ENCODE measurements at regions of chr14 and their contacts with region 1.

Region 1: GRCh38 chr14:76784266-76785264 is 23.3 kb downstream of the VASH1 start:
- DNase-seq: peak; percentile 90
- H3K4me3 ChIP-seq: no peak overlapping the region
- H3K27ac ChIP-seq: no peak overlapping the region
- H3K4me1 ChIP-seq: no peaks in the 10 kb centered on the region
- H3K27me3 ChIP-seq: no peaks in the 10 kb centered on the region
- CTCF ChIP-seq: peak; percentile 96 to 97
- POLR2A ChIP-seq: no peak

Region 2: GRCh38 chr14:76697246-76697905 is 87.2 kb before region 1 on chr14:
- CTCF ChIA-PET with region 1: interaction called, 12 read pairs
- POLR2A ChIA-PET with region 1: no interaction called
- dilution Hi-C with region 1: no loop called
- intact Hi-C with region 1: no loop called
- DNase-seq: no peak
- H3K4me3 ChIP-seq: no peak overlapping the region
- H3K27ac ChIP-seq: no peak overlapping the region
- H3K4me1 ChIP-seq: no peaks in the 10 kb centered on the region
- H3K27me3 ChIP-seq: peaks cover 2 to 3% of the 10 kb centered on the region in 2 experiments
- CTCF ChIP-seq: no peak
- POLR2A ChIP-seq: no peak

Region 3: DNA sequence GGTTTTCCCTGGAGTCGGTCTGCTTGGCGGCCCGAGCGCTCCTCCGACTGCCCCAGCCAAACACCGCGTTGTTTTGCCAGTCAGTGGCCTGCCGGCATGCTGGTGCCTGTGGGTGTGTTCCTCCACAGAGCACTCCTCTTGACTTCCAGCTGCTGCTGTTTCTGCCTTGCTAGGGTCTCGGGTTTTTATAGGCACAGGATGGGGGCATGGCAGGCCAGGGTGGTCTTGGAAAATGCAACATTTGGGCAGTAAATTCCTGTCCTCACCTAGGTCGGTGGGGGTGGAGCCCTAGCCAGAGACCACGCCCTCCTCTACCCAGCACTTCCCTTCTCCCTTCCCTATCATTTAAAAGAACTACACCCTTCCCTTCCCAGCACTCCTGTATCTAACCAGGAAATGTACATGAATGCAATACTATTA is 58.0 kb before region 1 on chr14:
- CTCF ChIA-PET with region 1: interaction called, 14 read pairs
- POLR2A ChIA-PET with region 1: no interaction called
- dilution Hi-C with region 1: no loop called
- intact Hi-C with region 1: no loop called
- DNase-seq: no peak
- H3K4me3 ChIP-seq: no peak overlapping the region
- H3K27ac ChIP-seq: no peak overlapping the region
- H3K4me1 ChIP-seq: peaks cover 3% of the 10 kb centered on the region
- H3K27me3 ChIP-seq: peaks cover 8 to 12% of the 10 kb centered on the region in 2 experiments
- CTCF ChIP-seq: no peak
- POLR2A ChIP-seq: no peak

Region 4: GRCh38 chr14:76761136-76761959 is 23.2 kb before region 1 on chr14 and contains the start of gene VASH1:
- CTCF ChIA-PET with region 1: interaction called, 26 read pairs
- POLR2A ChIA-PET with region 1: no interaction called
- dilution Hi-C with region 1: no loop called
- intact Hi-C with region 1: loop called (anchors 1 kb)
- DNase-seq: peak; percentile 75
- H3K4me3 ChIP-seq: peak within 1 kb of the TSS; percentile 81 to 98 (median 90)
- H3K27ac ChIP-seq: peak within 1 kb of the TSS; percentile 8
- H3K4me1 ChIP-seq: peaks cover 30% of the 10 kb centered on the region
- H3K27me3 ChIP-seq: peaks cover 2 to 6% of the 10 kb centered on the region in 2 experiments
- CTCF ChIP-seq: no peak
- POLR2A ChIP-seq: peak; percentile 82
- total RNA-seq, gene VASH1: 168 and 246 TPM in 2 replicates

Region 5: GRCh38 chr14:76767681-76768656 is 16.6 kb before region 1 on chr14:
- CTCF ChIA-PET with region 1: interaction called, 64 read pairs
- POLR2A ChIA-PET with region 1: no interaction called
- dilution Hi-C with region 1: no loop called
- intact Hi-C with region 1: loop called (anchors 1 kb)
- DNase-seq: peak; percentile 69
- H3K4me3 ChIP-seq: no peak overlapping the region
- H3K27ac ChIP-seq: peak overlapping the region; percentile 54
- H3K4me1 ChIP-seq: peaks cover 42% of the 10 kb centered on the region
- H3K27me3 ChIP-seq: no peaks in the 10 kb centered on the region
- CTCF ChIP-seq: no peak
- POLR2A ChIP-seq: peak; percentile 22

Region 6: GRCh38 chr14:76773188-76773885 is 11.2 kb before region 1 on chr14:
- CTCF ChIA-PET with region 1: interaction called, 64 read pairs
- POLR2A ChIA-PET with region 1: no interaction called
- dilution Hi-C with region 1: no loop called
- intact Hi-C with region 1: loop called (anchors 1 kb)
- DNase-seq: peak; percentile 89
- H3K4me3 ChIP-seq: no peak overlapping the region
- H3K27ac ChIP-seq: peak overlapping the region; percentile 92
- H3K4me1 ChIP-seq: peaks cover 27% of the 10 kb centered on the region
- H3K27me3 ChIP-seq: no peaks in the 10 kb centered on the region
- CTCF ChIP-seq: no peak
- POLR2A ChIP-seq: no peak

Region 7: GRCh38 chr14:76812211-76813044 is 27.9 kb after region 1 on chr14 and contains the start of gene ANGEL1:
- CTCF ChIA-PET with region 1: interaction called, 32 read pairs
- POLR2A ChIA-PET with region 1: no interaction called
- dilution Hi-C with region 1: no loop called
- intact Hi-C with region 1: loop called (anchors 1 kb)
- DNase-seq: peak; percentile 90
- H3K4me3 ChIP-seq: peak within 1 kb of the TSS; percentile 72 to 85 (median 75)
- H3K27ac ChIP-seq: peak within 1 kb of the TSS; percentile 34
- H3K4me1 ChIP-seq: peaks cover 14% of the 10 kb centered on the region
- H3K27me3 ChIP-seq: peaks cover 7 to 8% of the 10 kb centered on the region in 2 experiments
- CTCF ChIP-seq: no peak
- POLR2A ChIP-seq: peak; percentile 87
- total RNA-seq, gene ANGEL1: 14.8 and 18.4 TPM in 2 replicates

Measured in endothelial cell of umbilical vein (primary cell).